Activated CD8-positive, alpha-beta T cell treated with anti-CD3 and anti-CD28 coated beads for 36 hours (primary cell): ENCODE measurements at regions of chr5 and their contacts with region 1.

Region 1: GRCh38 chr5:172714491-172715421 is 56.2 kb downstream of the DUSP1 start:
- DNase-seq: peak; percentile 83
- ATAC-seq: peak; percentile 88
- H3K4me3 Mint-ChIP-seq: no peak overlapping the region
- H3K27ac Mint-ChIP-seq: no peak overlapping the region
- H3K4me1 Mint-ChIP-seq: peaks cover 4% of the 10 kb centered on the region
- H3K27me3 Mint-ChIP-seq: no peaks in the 10 kb centered on the region
- CTCF ChIP-seq: peak; percentile 90

Region 2: DNA sequence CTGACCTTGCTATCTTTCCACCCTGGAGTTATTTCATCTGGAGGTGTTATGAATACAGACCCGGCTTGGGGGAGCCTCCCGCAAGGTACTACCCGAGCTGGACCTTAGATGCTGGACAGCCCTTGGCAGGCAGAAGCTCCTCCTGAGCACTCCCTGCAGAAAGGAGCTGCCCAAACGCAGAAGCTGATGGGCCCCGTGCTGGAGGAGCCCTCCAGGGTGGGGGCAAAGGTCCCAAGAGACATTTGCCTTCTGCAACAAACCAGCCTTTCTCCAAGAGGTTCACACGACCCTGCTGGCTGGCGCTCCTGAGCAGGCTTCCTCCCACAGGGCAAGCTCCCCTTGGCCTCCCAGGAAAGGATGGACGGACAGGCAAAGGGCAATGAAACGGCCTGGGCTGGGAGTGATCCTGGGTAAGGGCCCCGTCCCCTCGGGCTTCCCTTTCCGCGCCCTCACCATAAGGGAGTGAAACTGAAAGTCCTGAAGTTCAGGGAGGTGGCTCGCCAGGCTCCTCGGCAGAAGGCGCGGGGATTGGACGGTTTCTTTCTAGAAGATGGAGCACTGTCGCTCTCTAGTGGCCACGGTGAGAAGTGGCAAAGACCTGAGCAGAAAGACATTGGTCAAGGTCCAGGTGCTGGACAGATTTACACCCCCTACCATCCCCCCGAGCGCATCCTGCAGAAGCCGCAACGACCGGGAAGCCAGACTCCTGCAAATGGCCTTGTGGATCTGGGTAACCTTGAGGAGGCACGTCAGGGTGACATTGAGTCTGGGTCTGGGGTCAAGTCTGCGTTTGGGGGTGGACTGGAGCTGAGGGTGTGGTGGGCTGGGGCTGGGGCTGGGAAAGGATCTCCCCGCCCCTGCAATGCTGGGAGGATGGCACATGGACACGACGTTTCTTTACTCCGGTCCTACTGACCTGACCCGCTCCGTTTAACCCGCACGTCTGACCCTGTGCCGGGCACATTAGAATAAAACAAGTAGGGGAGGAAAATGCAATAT is 17.3 kb before region 1 on chr5:
- CTCF ChIA-PET with region 1: interaction called, 10 read pairs
- POLR2A ChIA-PET with region 1: no interaction called
- intact Hi-C with region 1: no loop called
- DNase-seq: peak; percentile 89
- ATAC-seq: peak; percentile 97
- H3K4me3 Mint-ChIP-seq: peak overlapping the region; percentile 78
- H3K27ac Mint-ChIP-seq: peak overlapping the region; percentile 80
- H3K4me1 Mint-ChIP-seq: peaks cover 19% of the 10 kb centered on the region
- H3K27me3 Mint-ChIP-seq: peaks cover 15% of the 10 kb centered on the region
- CTCF ChIP-seq: peak; percentile 90

Region 3: DNA sequence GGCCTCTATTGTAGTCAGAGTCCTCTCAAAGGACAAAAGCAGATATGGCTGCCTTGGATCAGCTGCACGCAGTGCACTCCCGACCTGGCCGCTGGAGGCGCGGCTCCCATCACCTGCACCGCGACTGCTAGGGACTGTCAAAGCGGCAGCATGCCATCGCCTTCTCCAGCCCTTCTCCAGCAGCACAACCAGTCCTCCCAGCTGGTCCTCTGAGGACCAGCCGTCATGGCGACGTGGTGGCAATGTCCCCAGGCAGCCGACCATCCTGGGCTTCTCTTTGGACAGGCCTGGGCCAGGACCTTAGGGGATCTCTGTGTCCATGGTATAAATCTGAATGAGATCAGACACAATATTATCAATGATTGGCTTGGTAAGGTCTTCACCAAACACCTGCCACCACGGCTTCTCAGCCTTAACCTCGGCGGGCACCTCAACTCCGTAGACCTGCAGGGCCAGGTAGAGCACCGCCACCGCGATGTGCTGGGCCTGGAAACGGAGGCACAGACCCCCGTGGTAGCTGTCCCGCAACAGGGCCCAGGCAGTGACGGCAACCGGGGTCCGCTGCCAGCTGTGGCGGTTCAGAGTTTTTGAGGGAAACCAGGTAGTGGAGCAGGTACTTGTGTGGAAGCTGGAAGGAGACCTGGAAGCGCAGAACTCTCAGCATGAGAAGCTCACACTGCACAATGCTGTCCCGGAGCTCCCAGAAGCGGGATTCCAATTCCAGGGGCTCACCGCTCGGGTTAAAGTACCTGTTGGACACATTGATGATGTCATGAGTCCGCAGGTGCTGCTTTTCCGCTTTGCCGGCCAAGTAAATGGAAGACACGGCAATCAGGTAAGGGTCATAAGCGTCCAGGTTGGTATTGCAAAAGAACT is 47.7 kb after region 1 on chr5:
- CTCF ChIA-PET with region 1: interaction called, 13 read pairs
- POLR2A ChIA-PET with region 1: no interaction called
- intact Hi-C with region 1: no loop called
- DNase-seq: no peak
- ATAC-seq: no peak
- H3K4me3 Mint-ChIP-seq: no peak overlapping the region
- H3K27ac Mint-ChIP-seq: no peak overlapping the region
- H3K4me1 Mint-ChIP-seq: peaks cover 23% of the 10 kb centered on the region
- H3K27me3 Mint-ChIP-seq: no peaks in the 10 kb centered on the region
- CTCF ChIP-seq: no peak

Region 4: DNA sequence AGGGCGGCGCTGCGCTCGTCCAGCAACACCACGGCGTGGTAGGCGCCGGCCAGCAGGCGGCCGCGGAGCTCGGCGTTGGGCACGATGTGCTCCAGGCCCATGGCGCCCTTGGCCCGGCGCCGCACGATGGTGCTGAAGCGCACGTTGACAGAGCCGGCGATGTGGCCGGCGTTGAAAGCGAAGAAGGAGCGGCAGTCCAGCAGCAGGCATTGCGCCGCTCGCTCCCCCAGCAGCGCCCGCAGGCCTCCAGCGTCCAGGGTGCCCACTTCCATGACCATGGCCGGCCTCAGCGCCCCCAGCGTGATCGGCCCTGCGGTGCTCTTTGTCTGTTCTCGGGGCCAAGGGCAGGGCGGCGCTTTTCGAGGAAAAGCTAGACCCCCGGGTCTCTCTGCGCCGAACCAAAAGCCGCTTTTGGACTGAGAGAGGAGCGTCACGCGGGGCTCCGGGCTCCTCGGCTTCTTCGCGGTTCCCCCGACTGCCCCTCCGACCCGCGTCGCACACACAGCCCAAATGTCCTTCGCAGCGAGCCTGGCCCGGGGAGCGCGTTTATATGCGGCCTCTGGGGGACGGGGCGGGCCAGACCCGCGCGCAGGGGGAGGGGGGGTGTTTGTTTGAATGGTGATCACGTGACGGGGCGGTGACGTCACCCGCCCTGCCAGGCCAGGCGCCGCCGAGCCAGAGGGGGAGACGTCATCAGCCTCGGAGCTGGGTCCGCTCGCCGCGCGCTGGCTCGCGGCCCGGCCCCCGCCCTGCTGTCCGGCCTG is 56.1 kb after region 1 on chr5 and contains the start of gene DUSP1:
- CTCF ChIA-PET with region 1: interaction called, 26 read pairs
- POLR2A ChIA-PET with region 1: interaction called, 5 read pairs
- intact Hi-C with region 1: loop called (anchors 5 kb)
- DNase-seq: peak; percentile 99
- ATAC-seq: peak; percentile 72
- H3K4me3 Mint-ChIP-seq: peak within 1 kb of the TSS; percentile 90
- H3K27ac Mint-ChIP-seq: peak within 1 kb of the TSS; percentile 97
- H3K4me1 Mint-ChIP-seq: peaks cover 65% of the 10 kb centered on the region
- H3K27me3 Mint-ChIP-seq: no peaks in the 10 kb centered on the region
- CTCF ChIP-seq: peak; percentile 41
- total RNA-seq, gene DUSP1: 16.6 to 17.9 TPM

Region 5: DNA sequence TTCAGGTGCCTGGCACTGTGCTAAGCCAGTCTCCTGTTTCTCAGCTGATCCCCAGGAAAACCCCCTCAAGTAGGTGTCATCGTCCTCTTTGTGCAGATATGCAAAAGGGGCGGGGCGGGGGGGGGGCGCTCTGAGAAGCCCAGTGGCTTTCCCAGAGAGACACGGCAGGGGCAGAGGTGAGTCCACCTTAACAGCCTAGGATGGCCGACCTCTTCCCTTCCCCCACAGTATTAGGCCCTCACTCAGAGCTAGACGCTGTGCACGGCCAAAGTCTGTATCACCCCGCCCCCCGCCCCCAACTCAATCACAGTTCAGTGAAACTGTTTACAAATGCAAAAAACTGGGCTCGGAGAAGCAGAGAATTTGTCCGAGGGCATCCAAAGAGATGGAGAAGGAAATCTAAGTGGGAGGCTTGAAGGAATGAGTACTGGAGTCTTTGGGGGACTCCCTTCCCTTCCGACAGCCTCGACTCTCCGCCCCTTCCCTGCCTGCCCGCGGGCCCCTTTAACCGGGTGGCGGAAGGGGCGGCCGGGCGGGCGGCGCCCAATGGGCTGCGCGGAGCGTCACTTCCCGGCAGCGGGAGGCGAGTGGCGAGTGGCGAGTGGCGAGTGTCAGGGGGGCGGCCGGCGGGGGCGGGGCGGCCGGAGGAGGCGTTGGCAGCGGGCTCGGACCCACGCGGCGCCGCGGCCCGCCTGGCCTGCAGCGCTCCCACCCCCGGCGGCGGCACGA is 119.1 kb after region 1 on chr5 and contains the start of gene ERGIC1:
- CTCF ChIA-PET with region 1: interaction called, 9 read pairs
- POLR2A ChIA-PET with region 1: no interaction called
- intact Hi-C with region 1: loop called (anchors 10 kb)
- DNase-seq: peak; percentile 79
- ATAC-seq: peak; percentile 83
- H3K4me3 Mint-ChIP-seq: peak within 1 kb of the TSS; percentile 79
- H3K27ac Mint-ChIP-seq: peak within 1 kb of the TSS; percentile 80
- H3K4me1 Mint-ChIP-seq: peaks cover 40% of the 10 kb centered on the region
- H3K27me3 Mint-ChIP-seq: no peaks in the 10 kb centered on the region
- CTCF ChIP-seq: no peak
- total RNA-seq, gene ERGIC1: 56.1 to 57.0 TPM

Region 6: GRCh38 chr5:172932313-172933017 is 217.7 kb after region 1 on chr5:
- CTCF ChIA-PET with region 1: interaction called, 279 read pairs
- POLR2A ChIA-PET with region 1: interaction called, 8 read pairs
- intact Hi-C with region 1: loop called (anchors 1 kb)
- DNase-seq: peak; percentile 83
- ATAC-seq: peak; percentile 98
- H3K4me3 Mint-ChIP-seq: no peak overlapping the region
- H3K27ac Mint-ChIP-seq: no peak overlapping the region
- H3K4me1 Mint-ChIP-seq: peaks cover 2% of the 10 kb centered on the region
- H3K27me3 Mint-ChIP-seq: no peaks in the 10 kb centered on the region
- CTCF ChIP-seq: peak; percentile 96

Region 7: DNA sequence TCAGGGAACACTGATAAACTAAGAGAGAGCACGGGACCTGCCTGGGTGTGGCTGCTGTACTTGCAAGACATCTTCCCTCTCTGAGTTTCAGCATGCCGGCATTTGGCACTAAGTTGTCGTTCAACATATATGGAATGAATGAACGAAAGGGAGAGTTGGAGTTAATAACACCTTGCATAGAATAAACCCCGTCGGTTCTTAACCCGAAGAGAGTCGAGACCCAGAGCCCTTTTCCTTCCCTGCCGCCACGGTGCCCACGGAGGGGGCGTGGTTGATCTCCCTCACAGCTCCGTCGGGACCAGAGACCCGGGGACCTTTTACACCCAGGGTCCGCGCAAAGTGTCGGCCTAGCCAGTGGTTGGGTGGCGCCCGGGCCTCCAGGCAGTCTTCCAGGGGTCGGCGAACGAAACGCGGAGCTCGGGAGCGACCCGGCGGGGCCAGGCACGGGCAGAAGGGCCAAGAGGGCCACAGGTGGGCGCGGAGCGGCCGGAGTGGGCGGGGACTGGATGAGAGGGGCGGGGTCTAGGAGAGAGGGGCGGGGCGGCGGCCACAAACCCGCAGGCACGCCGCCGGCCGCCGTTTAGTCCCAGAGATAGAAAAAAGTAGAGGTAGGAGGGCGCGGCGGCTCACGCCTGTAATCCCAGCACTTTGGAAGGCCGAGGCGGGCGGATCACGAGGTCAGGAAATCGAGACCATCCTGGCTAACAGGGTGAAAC is 243.7 kb after region 1 on chr5:
- CTCF ChIA-PET with region 1: interaction called, 16 read pairs
- POLR2A ChIA-PET with region 1: interaction called, 5 read pairs
- intact Hi-C with region 1: no loop called
- DNase-seq: peak; percentile 71
- ATAC-seq: peak; percentile 81
- H3K4me3 Mint-ChIP-seq: peak overlapping the region; percentile 100
- H3K27ac Mint-ChIP-seq: peak overlapping the region; percentile 96
- H3K4me1 Mint-ChIP-seq: peaks cover 34% of the 10 kb centered on the region
- H3K27me3 Mint-ChIP-seq: no peaks in the 10 kb centered on the region
- CTCF ChIP-seq: no peak